Activated CD4-positive, alpha-beta memory T cell treated with anti-CD3 and anti-CD28 coated beads, Interleukin-2, amount 10 ng/mL, durations not matched to agents 7 days and 5 days (primary cell): ENCODE measurements at regions of chr12 and their contacts with region 1.

Region 1: DNA sequence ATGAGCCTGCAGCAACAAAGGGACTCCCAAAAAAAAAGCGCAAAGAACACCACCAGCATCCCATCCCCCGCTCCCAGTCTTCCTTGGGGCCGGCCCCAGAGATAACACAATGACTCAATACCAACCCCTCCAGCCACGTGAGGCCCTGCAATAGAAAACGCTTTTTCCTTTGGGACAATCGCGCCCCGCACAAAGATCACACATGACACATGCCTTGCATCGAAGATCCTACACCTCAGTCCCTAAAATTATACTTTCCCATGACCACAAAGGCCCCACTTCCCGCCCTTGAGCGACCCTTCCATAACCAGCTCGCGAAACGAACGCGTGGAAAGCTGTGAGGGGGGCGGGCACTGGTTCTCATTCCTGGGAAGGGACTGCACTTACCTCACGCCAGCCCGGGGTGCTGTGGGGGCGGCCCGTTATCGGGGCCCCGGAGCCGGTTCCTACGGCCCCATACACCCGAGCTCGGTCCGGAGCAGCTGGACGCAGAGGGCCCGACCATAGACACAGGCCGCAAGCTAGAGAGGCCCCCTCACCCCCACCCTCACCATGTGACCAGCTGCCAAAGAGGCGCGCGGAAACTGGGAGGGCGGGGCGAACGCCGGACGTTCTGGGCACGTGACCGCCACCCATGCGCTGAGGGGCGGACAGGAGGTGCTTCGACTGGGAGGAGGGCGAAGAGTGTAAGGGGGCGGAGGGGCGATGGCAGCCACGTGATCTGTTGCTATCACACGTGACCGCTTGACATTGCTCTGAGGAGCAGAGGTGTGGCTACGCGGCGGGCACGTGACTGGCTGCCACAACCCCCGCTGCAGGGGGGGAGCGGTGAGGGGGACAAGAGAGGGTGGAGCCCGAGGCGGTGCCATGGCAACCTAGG is at the start of gene CDK4:
- DNase-seq: peak; percentile 99
- H3K4me3 Mint-ChIP-seq: peak within 1 kb of the TSS; percentile 95
- H3K27ac Mint-ChIP-seq: peak within 1 kb of the TSS; percentile 74
- H3K4me1 Mint-ChIP-seq: peaks cover 58% of the 10 kb centered on the region
- H3K27me3 Mint-ChIP-seq: peaks cover 3% of the 10 kb centered on the region
- total RNA-seq, gene CDK4: 87.7 to 88.6 TPM

Region 2: DNA sequence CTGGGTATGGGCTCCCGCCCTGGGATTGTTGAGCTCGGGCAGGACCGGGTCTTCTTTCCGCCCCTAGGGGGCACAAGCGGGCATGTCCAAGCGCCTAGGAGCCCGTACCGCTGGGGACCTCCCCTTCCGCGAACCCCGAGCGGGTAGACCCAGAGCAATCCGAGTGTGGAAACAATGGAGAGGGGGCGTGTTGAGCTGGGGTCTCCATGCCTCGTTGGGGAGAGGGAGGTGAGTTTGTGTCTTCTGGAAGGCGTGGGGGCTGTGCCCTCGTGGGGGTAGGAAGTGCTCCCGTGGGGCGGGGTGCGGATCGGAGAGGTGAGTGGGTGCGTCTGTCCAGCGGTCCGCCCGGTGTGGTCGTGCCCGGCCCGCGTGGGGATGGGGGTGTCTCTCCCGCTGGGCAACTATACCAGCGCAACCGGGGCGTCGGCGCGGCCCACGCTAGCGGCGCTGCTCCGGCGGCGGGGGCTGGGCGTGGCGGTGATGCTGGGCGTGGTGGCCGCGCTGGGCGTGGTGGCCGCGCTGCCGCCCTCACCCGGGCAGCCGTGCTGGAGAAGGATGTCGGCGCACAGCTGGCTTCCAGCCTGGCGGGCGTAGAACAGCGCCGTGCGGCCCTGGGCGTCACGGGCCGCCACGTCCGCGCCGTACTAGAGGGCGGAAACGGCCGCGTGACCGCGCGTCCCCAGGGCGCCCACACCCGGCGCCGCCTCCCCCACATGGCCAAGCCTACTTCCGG is 25.7 kb before region 1 on chr12:
- CTCF ChIA-PET with region 1: no interaction called
- POLR2A ChIA-PET with region 1: no interaction called
- DNase-seq: no peak
- H3K4me3 Mint-ChIP-seq: no peak overlapping the region
- H3K27ac Mint-ChIP-seq: no peak overlapping the region
- H3K4me1 Mint-ChIP-seq: peaks cover 2% of the 10 kb centered on the region
- H3K27me3 Mint-ChIP-seq: no peaks in the 10 kb centered on the region

Region 3: GRCh38 chr12:57765042-57765697 is 13.1 kb after region 1 on chr12:
- CTCF ChIA-PET with region 1: interaction called, 34 read pairs
- POLR2A ChIA-PET with region 1: interaction called, 6 read pairs
- DNase-seq: peak; percentile 67
- H3K4me3 Mint-ChIP-seq: peak overlapping the region; percentile 85
- H3K27ac Mint-ChIP-seq: peak overlapping the region; percentile 50
- H3K4me1 Mint-ChIP-seq: peaks cover 34% of the 10 kb centered on the region
- H3K27me3 Mint-ChIP-seq: peaks cover 12% of the 10 kb centered on the region

Region 4: DNA sequence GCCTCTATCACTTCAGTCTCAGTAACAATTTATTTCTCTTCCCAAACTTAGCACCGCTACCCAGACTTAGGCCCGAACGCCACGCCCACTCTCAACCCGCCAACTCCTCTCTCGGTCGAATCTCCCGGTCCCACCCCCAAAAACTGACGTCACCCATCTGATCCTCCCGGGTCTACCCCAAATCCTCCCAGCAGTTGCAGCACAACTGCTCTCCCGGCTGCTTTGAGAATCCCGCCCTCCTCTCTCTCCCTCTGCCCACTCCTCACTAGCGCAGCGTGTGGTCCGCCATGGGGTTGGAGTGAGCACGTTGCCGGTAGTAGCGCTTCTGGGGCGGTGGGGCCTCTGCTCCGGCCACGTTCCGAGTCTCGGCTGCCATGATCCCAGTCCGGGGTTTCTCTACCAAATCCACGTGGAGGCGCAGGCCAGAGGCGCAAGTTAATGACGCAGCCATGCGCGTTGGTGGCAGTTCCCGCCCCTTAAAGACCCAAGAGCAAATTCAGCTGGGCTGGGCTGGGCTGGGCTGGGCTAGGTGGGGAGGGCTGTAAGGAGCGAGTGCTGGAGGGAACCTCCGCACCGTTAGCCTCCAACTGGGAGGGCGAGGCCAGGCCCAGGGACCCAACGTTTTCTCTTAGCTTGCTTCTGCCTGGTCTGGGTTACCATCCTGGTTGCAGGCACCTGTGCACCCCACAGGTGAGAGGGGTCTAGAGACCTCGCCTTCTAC is 19.8 kb after region 1 on chr12 and contains the start of gene METTL1:
- CTCF ChIA-PET with region 1: interaction called, 34 read pairs
- POLR2A ChIA-PET with region 1: interaction called, 5 read pairs
- DNase-seq: peak; percentile 95
- H3K4me3 Mint-ChIP-seq: peak within 1 kb of the TSS; percentile 92
- H3K27ac Mint-ChIP-seq: peak within 1 kb of the TSS; percentile 90
- H3K4me1 Mint-ChIP-seq: peaks cover 25% of the 10 kb centered on the region
- H3K27me3 Mint-ChIP-seq: no peaks in the 10 kb centered on the region
- total RNA-seq, gene METTL1: 12.5 to 13.8 TPM

Region 5: GRCh38 chr12:57822392-57823130 is 70.5 kb after region 1 on chr12:
- CTCF ChIA-PET with region 1: no interaction called
- POLR2A ChIA-PET with region 1: no interaction called
- DNase-seq: no peak
- H3K4me3 Mint-ChIP-seq: no peak overlapping the region
- H3K27ac Mint-ChIP-seq: no peak overlapping the region
- H3K4me1 Mint-ChIP-seq: no peaks in the 10 kb centered on the region
- H3K27me3 Mint-ChIP-seq: no peaks in the 10 kb centered on the region